Left ventricle myocardium inferior (tissue), 1 donor: ENCODE measurements at regions of chr17 and their contacts with region 1.

Region 1: DNA sequence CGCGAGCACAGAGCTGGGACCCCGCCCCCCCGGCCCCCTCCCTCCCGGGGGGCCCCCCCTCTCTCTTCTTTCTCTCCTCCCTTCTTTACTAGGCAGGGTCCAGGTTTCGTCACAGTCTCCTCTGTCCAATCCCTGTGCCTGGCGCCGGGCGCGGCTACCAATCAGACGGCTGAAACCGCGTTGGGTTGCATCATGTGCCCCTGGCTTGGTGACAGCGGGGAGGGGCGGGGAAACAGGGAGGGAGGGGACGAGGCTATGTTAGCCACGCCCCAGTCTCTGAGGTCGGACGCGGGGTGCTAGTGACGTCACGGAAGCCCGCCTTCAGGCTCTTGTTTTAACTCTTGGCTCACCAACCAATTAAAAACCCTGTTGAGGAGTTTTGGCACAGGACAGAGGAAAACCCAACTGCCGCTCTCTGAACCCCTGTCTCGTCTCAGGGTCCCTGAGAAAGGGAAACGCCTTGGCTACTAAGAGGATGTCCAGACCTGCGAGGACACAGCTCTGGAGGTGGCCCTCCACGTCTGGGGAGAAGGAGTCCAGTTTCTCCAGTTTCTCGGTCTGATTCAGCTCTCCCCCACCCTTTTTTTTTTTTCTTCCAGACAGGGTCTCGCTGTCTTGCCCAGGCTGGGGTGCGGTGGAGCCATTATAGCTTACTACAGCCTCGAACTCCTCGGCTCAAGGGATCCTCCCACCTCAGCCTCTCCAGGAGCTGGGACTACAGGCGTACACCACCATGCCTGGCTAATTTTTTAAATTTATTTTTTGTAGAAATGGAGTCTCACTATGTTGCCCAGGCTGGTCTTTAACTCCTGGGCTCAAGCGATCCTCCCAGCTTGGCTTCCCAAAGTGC is 439 bp upstream of the PLEKHH3 start:
- DNase-seq: peak; percentile 100
- H3K4me3 ChIP-seq: peak overlapping the region; percentile 98
- H3K27ac ChIP-seq: peak overlapping the region; percentile 97
- H3K4me1 ChIP-seq: peaks cover 90% of the 10 kb centered on the region
- H3K27me3 ChIP-seq: no peaks in the 10 kb centered on the region
- CTCF ChIP-seq: no peak

Region 2: DNA sequence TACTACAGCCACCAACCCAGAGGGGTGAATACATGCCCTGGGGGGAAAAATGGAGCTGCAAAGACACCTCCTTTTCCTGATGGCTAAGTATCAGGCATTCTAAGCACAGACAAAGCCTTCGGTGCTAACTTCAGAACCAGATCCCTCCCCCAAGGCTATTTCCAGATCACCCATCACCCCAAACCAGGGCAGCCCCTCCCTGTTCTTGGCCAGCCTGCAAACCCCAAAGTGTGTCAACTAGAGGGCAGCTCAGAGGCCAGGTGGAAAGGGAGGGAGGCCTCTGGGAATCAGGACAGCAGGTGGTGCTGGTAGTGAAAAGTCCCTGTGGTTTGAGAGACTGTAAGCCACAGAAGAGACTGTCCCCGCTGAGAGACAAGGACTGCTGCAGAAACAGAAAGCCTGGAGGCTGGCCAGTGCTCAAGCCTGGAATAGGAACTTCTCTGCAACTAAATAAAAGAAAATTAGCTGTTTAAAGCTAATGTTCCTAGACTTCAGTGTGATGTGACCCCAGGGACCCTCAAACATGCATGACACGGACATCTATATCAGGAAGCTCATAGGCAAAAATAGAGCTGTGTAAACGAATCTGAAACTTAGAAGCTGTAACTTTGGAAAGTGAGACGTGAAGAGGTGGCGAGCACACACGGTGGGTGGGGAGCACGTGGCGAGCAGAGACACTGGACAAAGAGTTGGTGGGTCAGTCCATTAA is 58.6 kb before region 1 on chr17:
- intact Hi-C with region 1: loop called (anchors 10 kb)
- DNase-seq: peak; percentile 60
- H3K4me3 ChIP-seq: peak overlapping the region; percentile 46
- H3K27ac ChIP-seq: peak overlapping the region; percentile 89
- H3K4me1 ChIP-seq: peaks cover 20% of the 10 kb centered on the region
- H3K27me3 ChIP-seq: no peaks in the 10 kb centered on the region
- CTCF ChIP-seq: peak; percentile 51